ENCODE measurements at regions of chr3 and their contacts with region 1.

Region 1: GRCh38 chr3:189961525-189962161 is 159.1 kb downstream of the P3H2 start:
- DNase-seq: peak; percentile 91

Region 2: DNA sequence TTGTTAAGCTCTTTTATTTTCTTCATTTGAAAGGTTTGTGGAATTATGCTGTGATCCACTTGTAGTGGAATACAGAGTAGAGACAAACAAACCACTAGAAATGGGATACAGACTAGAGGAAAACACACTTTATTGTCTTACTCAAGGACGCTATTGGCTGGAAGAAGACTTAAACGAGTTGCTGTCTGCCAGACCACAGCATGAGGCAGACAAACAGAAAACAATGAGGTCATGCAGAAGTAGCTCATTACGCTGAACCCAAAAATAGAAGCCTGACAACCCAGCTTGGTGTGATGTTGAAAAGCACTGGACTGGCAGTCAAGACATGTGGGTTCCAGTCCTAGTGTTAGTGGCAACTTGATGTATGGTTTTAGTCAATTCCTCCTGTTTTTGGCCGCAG is 221.5 kb after region 1 on chr3:
- in situ Hi-C with region 1: loop called (anchors 25 kb)
- DNase-seq: peak; percentile 67

Measured in SK-MEL-5 (cell line).